ENCODE measurements at regions of chr4 and their contacts with region 1.

Region 1: DNA sequence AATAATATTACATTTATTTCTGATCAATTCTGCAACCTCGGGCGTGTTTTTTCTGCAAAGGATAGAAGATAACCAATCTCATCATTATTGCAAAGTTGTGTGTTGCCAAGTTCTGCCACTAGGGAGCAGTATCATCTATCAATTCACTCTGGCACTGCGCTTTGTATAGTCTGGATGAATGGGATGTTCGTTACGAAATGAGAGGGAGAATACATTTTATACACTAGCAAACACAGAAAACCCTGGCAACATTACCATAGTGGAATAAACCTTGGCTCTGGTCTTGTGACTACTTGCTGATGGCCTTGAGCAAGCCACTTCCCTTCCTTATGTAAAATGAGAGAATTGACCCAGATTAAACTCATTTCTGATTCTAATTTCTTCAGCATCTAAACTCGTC is 97.5 kb upstream of the ZNF518B start:
- DNase-seq: peak; percentile 37
- CTCF ChIP-seq: peak; percentile 80

Region 2: GRCh38 chr4:10535912-10536311 is 18.8 kb before region 1 on chr4:
- CTCF ChIA-PET with region 1: interaction called, 74 read pairs
- POLR2A ChIA-PET with region 1: no interaction called
- DNase-seq: no peak
- CTCF ChIP-seq: no peak

Region 3: DNA sequence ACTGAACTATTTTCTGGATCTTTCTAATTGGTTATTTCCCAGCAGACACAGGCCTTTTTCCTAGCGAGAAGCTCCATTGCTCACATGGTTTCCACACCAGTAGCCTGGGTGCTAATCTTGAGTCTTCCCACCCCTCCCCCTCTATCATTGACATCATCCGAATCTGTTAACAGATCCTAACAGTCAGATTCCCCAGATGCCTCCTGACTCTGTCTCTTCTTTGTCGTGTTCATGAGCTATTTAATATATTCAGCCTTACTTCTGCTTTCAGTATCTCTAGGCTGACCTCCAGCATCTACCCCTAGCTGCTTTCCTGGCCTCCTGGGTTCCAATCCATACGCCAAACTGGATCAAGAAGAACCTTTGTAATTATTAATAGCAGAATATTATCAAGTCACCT is 44.9 kb after region 1 on chr4:
- CTCF ChIA-PET with region 1: no interaction called
- POLR2A ChIA-PET with region 1: no interaction called
- DNase-seq: peak; percentile 29
- CTCF ChIP-seq: no peak

Region 4: GRCh38 chr4:10856271-10856782 is 301.6 kb after region 1 on chr4:
- CTCF ChIA-PET with region 1: no interaction called
- POLR2A ChIA-PET with region 1: no interaction called
- DNase-seq: no peak
- CTCF ChIP-seq: no peak

Region 5: DNA sequence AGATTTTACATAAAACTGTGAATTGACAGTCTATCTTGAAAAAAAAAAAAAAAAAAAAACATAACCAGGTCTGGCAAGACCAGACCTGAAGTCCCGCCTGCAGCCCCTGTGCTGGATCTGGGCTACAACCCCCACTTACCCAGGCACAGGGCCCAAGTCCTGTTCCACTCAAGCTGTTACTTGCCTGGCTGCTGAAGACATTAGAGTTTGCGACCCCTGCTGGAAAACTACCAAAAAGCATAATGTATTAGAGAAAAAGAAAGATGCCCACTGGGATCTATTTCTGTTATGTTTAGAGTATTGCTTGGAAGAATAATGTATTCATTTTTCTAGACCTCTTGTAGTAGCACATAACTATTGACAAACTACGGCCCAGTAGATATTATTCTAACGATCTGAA is 869.3 kb after region 1 on chr4:
- CTCF ChIA-PET with region 1: interaction called, 11 read pairs
- POLR2A ChIA-PET with region 1: no interaction called
- DNase-seq: peak; percentile 58
- CTCF ChIP-seq: peak; percentile 64

Measured in GM10248 (cell line).